H1 (cell line): ENCODE measurements at regions of chr17 and their contacts with region 1.

Region 1: GRCh38 chr17:78970834-78971773 is 8.6 kb downstream of the LGALS3BP start:
- DNase-seq: peak; percentile 41 to 92
- H3K4me3 ChIP-seq: no peak overlapping the region
- H3K27ac ChIP-seq: no peak overlapping the region
- H3K4me1 ChIP-seq: peaks cover 0 to 5% (median 4%) of the 10 kb centered on the region in 4 experiments; a peak in 4 of 7 replicates
- H3K27me3 ChIP-seq: no peaks in the 10 kb centered on the region
- CTCF ChIP-seq: peak; percentile 87 to 99 (median 91)
- EP300 ChIP-seq: no peak
- POLR2A ChIP-seq: no peak
- RAD21 ChIP-seq: peak; percentile 85 to 92

Region 2: DNA sequence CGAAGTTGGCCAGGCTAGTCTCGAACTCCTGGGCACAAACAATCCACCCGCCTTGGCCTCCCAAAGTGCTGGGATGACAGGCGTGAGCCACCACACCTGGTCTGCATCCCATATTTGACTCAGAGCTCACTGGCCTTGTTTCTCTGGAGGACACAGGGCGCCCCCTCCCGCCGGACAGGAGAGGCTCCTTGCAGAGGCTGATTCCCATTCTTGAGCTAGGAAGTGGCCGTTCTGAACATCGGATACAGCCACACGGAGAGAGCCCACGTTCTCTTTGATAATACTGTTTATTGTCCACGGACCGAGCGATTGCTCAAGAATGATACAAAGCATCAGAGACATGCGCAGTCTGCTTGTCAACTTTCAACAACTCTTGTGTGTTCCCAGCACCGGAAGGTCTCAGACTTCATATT is 118.4 kb before region 1 on chr17:
- CTCF ChIA-PET with region 1: interaction called, 14 read pairs
- POLR2A ChIA-PET with region 1: interaction called, 3 read pairs
- DNase-seq: peak in 1 of 2 experiments; percentile 59
- H3K4me3 ChIP-seq: no peak overlapping the region
- H3K27ac ChIP-seq: no peak overlapping the region
- H3K4me1 ChIP-seq: no peaks in the 10 kb centered on the region; a peak in 1 of 7 replicates
- H3K27me3 ChIP-seq: no peaks in the 10 kb centered on the region
- CTCF ChIP-seq: peak; percentile 42 to 45 (median 44)
- EP300 ChIP-seq: no peak
- POLR2A ChIP-seq: no peak
- RAD21 ChIP-seq: peak in 1 of 2 experiments; percentile 40; a peak in 1 of 4 replicates

Region 3: DNA sequence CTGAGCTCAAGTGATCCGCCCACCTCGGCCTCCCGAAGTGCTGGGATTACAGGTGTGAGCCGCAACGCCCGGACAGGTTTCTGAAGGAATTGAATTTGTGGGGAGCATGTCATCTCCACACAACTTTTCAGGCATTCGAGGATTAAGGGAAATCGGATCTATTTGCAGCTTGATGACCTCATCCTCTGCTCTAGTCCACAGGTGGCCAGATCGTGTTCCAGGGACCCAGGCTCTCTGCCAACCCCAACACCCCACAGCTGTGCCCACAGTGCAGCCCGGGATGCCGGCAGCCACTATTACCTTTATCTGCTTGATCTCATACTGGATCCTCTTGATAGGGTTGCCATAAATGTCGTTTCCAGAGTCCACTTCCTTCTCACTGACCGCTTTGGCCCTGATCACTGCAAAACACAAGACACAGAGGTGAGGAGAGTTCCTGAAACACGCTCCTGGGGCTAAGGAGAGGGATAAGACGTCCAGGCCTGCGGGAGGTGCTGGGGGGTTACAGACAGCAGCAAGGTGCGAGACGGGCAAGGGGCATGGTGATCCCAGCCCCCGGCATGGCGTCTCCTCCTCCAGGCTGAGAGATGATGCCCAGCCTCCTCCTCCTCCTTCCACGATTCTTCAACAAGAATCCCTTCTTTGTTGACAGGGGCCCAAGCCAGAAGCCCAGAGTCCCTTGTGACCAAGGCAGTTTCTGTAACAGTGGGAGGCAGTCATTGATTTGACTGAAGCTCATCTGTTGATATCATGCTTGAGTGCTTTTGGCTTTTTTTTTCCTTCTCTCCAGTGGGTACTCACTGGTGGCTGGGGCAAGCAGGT is 97.4 kb before region 1 on chr17:
- CTCF ChIA-PET with region 1: interaction called, 30 read pairs
- POLR2A ChIA-PET with region 1: no interaction called
- DNase-seq: no peak
- H3K4me3 ChIP-seq: no peak overlapping the region
- H3K27ac ChIP-seq: no peak overlapping the region
- H3K4me1 ChIP-seq: no peaks in the 10 kb centered on the region; a peak in 1 of 7 replicates
- H3K27me3 ChIP-seq: no peaks in the 10 kb centered on the region
- CTCF ChIP-seq: no peak
- EP300 ChIP-seq: no peak
- POLR2A ChIP-seq: no peak
- RAD21 ChIP-seq: no peak

Region 4: GRCh38 chr17:78903101-78903779 is 67.9 kb before region 1 on chr17 and contains the start of gene CEP295NL:
- CTCF ChIA-PET with region 1: interaction called, 11 read pairs
- POLR2A ChIA-PET with region 1: no interaction called
- DNase-seq: no peak
- H3K4me3 ChIP-seq: no peak within 1 kb of the TSS
- H3K27ac ChIP-seq: no peak within 1 kb of the TSS
- H3K4me1 ChIP-seq: peaks cover 4 to 26% (median 14%) of the 10 kb centered on the region in 4 experiments
- H3K27me3 ChIP-seq: no peaks in the 10 kb centered on the region
- CTCF ChIP-seq: no peak
- EP300 ChIP-seq: no peak
- POLR2A ChIP-seq: no peak
- RAD21 ChIP-seq: no peak
- total RNA-seq, gene CEP295NL: 1.4 and 2.0 TPM in 2 replicates

Region 5: GRCh38 chr17:78933025-78933958 is 37.8 kb before region 1 on chr17:
- CTCF ChIA-PET with region 1: interaction called, 35 read pairs
- POLR2A ChIA-PET with region 1: no interaction called
- DNase-seq: no peak
- H3K4me3 ChIP-seq: no peak overlapping the region
- H3K27ac ChIP-seq: no peak overlapping the region
- H3K4me1 ChIP-seq: peaks cover 0 to 15% (median 8%) of the 10 kb centered on the region in 4 experiments; a peak in 5 of 7 replicates
- H3K27me3 ChIP-seq: no peaks in the 10 kb centered on the region; a peak in 1 of 7 replicates
- CTCF ChIP-seq: no peak
- EP300 ChIP-seq: no peak
- POLR2A ChIP-seq: no peak
- RAD21 ChIP-seq: no peak

Region 6: DNA sequence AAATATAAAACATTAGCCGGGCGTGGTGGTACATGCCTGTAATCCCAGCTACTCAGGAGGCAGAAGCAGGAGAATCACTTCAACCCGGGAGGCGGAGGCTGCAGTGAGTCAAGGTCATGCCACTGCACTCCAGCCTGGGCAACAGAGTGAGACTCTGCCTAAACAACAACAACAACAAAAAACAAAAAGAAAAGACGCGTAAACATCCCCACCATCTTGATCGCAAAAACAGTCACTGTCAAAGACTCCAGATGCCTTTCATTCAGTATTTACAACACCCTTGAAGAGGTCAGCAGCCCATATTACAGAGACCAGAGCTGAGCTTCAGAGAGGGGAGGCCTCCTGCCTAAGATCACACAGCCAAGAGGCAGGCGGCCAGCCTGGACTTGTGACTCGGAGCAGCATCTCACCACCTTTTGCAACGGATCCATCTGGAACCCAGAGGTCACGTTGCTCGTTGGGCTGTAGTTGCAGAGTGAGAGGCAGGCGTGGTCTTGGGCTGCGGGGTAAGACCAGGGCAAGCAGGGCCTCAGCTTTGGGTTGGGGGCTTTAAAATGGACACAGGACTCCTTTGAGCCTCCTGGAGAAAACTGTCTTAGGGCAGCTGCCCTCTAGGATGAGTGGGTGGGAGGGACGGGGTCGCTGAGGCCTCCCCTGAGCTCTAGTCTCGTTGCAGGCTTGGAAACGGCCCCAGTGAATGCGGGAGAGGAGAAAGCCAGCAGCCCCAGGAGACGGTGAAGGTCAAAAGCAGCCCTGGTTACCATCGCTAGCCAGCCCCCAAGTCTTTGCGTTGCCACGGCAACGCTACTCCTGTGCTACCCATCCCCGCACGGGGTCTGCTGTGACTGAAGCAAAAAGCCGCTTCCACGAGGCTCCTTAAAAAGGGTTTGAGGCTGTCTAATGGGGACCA is 17.5 kb before region 1 on chr17:
- CTCF ChIA-PET with region 1: interaction called, 18 read pairs
- POLR2A ChIA-PET with region 1: interaction called, 10 read pairs
- DNase-seq: no peak
- H3K4me3 ChIP-seq: no peak overlapping the region
- H3K27ac ChIP-seq: no peak overlapping the region
- H3K4me1 ChIP-seq: peaks cover 0 to 7% (median under 1%) of the 10 kb centered on the region in 4 experiments; a peak in 3 of 7 replicates
- H3K27me3 ChIP-seq: no peaks in the 10 kb centered on the region
- CTCF ChIP-seq: no peak
- EP300 ChIP-seq: no peak
- POLR2A ChIP-seq: no peak
- RAD21 ChIP-seq: no peak

Region 7: DNA sequence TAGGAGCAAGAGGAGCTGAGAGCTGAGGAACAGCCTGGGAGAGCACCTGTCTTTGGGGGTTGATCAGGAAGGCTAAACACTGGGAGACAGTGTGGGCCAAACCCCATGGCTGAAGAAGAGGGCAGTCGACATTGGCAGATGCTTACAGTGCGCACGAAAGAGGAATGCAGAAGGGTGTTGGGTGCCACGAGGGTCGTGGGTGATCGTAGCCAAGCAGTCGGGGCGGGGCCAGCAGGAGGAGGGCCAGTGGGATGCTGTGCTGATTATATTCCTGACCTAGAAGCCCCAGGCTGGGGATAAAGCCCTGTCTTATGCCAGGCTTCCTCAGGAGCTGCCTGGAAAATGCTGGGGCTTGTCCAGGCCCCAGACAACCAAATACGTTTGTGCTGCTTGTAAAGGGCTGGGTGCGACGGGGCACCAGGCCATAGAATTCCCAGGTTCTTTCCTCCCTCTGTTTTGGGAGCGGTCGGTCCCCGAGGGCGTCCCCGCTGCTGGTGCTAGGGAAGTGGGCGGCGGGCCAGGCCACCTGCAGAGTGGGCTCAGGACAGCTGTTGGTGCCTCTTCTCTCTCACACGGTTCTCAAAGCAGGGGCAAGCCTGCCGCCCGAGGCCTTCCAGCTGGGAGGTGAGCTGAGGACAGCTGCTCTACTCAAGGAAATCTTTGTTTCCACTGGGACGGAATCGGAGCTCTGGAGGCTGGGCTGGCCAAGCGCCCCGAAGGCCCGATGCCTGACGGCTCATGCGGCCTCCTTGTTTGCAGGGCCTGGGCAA is 62.8 kb after region 1 on chr17:
- CTCF ChIA-PET with region 1: no interaction called
- POLR2A ChIA-PET with region 1: no interaction called
- DNase-seq: no peak
- H3K4me3 ChIP-seq: no peak overlapping the region
- H3K27ac ChIP-seq: no peak overlapping the region
- H3K4me1 ChIP-seq: 0 out of 7 replicates have a peak, but pooled peaks cover 0 to 3% (median 0%) of the 10 kb centered on the region in 4 experiments
- H3K27me3 ChIP-seq: peaks cover 0 to 7% (median 3%) of the 10 kb centered on the region in 4 experiments; a peak in 4 of 7 replicates
- CTCF ChIP-seq: no peak
- EP300 ChIP-seq: no peak
- POLR2A ChIP-seq: no peak
- RAD21 ChIP-seq: no peak

Region 8: DNA sequence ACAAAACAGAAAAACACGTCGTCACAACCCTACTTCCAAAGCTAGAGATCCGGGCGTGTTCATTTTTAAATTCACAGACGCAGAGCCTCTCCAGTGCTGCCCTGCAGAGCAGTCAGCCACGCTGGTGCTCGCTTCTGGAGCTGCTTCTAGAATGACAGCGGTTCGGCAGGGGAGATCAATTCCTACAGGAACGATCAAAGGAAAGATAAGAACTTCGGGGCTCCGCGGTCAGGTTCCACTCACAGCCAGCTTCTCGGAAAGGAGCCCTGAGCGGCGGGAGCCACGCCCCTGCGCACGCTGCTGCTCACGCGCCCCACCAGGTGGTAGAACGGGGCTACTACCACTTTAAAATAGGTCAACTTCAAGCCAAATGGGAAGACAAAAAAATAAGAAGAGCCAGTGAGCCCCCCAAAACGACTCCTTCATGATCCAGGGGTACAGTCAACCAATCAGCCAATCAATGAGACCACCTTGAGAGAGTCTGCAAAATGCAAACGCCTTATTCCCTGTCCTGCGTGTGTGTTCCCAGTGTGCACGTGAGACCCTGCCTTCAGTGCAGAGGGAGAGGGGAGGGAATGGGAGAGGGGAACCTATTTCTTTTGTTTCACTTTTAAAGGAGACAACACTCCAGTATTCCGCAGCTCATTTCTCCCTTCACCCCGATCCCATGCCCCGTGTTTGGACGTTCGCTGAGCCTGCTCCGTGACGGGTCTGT is 430.0 kb after region 1 on chr17:
- CTCF ChIA-PET with region 1: no interaction called
- POLR2A ChIA-PET with region 1: no interaction called
- DNase-seq: peak; percentile 47 to 90
- H3K4me3 ChIP-seq: peak overlapping the region; percentile 32 to 59 (median 46); a peak in 7 of 8 replicates
- H3K27ac ChIP-seq: no peak overlapping the region
- H3K4me1 ChIP-seq: peaks cover 0 to 8% (median 5%) of the 10 kb centered on the region in 4 experiments; a peak in 6 of 7 replicates
- H3K27me3 ChIP-seq: peaks cover 0 to 24% (median 15%) of the 10 kb centered on the region in 4 experiments; a peak in 6 of 7 replicates
- CTCF ChIP-seq: peak; percentile 68 to 80 (median 70)
- EP300 ChIP-seq: no peak
- POLR2A ChIP-seq: no peak
- RAD21 ChIP-seq: peak; percentile 55 to 58